ENCODE measurements at regions of chr18 and their contacts with region 1.

Region 1: DNA sequence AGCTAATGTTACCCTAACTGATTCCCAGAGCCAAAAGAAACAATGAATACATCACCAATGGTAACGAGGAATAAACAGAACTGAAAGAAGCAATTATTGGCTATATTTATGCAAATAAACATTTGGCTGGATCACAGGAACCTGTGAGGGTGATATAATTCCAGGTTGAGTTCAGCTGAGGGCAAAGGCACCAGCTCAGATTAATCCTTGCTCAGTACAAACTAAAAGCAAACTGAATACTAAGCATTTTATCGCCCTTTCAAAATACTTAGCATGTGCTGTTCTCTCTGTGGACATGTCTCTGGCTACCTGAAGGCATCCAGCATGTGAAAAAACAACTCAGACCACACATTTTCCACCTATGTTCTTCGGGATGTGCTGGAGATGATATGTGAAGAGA is 791.7 kb downstream of the METTL4 start:
- DNase-seq: no peak
- H3K4me3 ChIP-seq: no peak overlapping the region
- H3K27ac ChIP-seq: no peak overlapping the region
- H3K4me1 ChIP-seq: no peaks in the 10 kb centered on the region
- H3K27me3 ChIP-seq: no peaks in the 10 kb centered on the region
- CTCF ChIP-seq: no peak
- POLR2A ChIP-seq: no peak

Region 2: GRCh38 chr18:1691863-1692262 is 87.7 kb before region 1 on chr18:
- intact Hi-C with region 1: loop called in 1 of 2 experiments (anchors 10 kb)
- DNase-seq: no peak
- H3K4me3 ChIP-seq: no peak overlapping the region
- H3K27ac ChIP-seq: no peak overlapping the region
- H3K4me1 ChIP-seq: no peaks in the 10 kb centered on the region
- H3K27me3 ChIP-seq: no peaks in the 10 kb centered on the region
- CTCF ChIP-seq: no peak
- POLR2A ChIP-seq: no peak

Measured in adrenal gland (tissue), 19 donors.